Cardiac septum (tissue), 1 donor: ENCODE measurements at regions of chr9 and their contacts with region 1.

Region 1: DNA sequence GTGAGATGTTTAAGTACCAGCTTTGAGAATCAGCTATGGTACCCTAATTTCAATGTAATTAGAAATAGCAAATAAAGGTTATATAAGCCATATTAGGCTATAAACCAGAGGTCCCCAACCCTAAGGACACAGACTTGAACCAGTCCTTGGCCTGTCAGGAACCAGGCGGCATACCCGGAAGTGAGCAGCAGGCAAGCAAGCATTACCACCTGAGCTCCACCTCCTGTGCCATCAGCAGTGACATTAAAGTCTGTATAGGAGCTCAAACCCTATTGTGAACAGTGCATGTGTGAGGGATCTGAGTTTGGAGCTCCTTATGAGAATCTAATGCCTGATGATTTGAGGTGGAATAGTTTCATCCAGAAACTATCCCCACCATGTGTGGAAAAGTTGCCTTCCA is 1009.5 kb downstream of the PTPRD start:
- DNase-seq: no peak

Region 2: DNA sequence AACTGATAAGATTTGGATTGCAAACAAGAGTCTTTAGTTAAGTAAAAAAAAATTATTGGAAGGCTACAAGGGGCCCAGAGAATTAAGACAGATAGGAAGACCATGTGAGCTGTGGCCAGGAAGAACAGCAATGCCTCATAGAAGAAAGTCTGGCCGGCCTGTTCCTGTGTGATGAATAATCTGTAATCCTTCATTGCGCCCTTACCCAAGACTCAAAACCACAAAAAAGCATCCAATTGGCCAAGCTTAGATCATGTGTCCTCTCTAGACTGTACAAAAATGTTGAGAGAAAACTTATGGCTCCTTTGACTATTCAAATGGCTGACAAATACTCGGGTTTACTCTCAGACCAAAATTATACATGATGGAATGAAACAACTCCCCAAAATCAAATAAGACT is 374.1 kb before region 1 on chr9:
- intact Hi-C with region 1: no loop called
- DNase-seq: no peak

Region 3: DNA sequence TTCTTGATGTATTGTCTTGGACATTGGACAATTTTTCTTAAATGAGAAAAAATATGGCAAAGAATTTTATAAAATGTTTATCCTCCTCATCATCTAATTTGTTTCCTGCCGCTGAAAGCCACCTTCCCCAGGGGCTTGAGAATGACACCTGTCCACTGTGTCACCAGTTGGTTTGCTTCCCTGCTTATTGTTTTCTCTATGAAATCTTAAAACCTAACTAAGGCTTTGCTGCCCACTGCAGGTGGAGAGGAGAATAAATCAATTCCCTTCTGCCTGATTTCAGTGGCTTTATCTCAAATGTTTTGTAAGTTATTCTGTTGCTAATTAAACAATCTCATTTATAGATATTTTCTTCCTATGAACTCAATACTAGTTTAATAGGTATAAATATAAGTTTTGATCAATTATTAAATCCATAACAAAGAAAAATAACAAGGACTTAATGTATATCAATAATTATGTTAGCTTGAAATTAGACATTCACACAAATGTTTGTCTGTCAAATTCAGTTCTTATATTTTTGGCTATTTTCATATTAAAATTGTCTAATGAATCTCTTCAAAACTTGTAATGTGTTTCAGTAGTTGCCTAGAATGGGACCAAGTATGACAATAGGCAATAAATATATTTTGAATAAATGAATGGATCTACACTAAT is 187.0 kb after region 1 on chr9:
- intact Hi-C with region 1: loop called (anchors 10 kb)
- DNase-seq: no peak

Region 4: GRCh38 chr9:9942764-9943424 is 339.5 kb after region 1 on chr9:
- intact Hi-C with region 1: loop called (anchors 10 kb)
- DNase-seq: peak; percentile 75